ENCODE measurements at regions of chr4 and their contacts with region 1.

Region 1: DNA sequence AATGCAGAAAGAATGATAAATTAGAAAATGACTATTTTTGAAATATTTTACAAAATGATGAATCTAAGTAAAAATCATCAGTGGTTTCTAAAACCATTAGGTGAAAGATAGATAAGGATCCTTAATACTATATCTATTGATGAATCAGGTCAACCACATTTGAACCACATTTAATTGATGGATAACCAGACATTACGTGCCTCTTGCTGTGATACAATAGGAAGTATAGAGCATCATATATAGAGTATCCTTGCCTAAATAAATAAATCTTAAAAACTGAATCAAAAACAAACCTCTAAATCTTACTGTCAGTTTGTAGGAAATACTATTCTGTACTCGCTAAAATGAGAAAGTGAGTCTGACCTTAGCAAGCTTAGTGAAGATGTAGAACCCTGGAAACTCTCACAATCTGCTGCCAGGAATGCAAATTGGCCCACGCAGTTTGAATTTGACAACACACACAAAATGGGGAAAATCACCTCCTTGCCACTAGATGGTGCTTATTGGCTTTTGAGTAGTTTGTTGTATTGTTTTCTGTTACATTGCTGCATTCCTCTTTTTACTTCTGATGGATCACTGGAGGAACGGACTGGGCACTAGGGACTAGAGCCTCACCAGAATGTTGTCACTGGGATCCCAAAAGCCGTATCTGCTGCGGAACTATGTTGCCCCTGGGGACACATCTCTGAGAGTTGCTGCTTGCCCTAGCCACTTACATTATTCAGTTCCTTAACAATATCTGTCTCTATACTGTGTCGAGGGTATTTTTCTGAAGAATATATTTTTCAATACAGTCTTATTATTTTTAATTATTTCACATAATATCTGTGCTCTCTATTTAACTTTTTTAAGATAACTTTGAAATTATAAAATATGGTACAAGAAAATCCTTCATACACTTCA is 25.4 kb upstream of the SLAIN2 start:
- DNase-seq: peak; percentile 43
- ATAC-seq: peak; percentile 74
- H3K4me3 Mint-ChIP-seq: no peak overlapping the region
- H3K27ac Mint-ChIP-seq: no peak overlapping the region
- H3K4me1 Mint-ChIP-seq: peaks cover 4% of the 10 kb centered on the region
- H3K27me3 Mint-ChIP-seq: no peaks in the 10 kb centered on the region

Region 2: DNA sequence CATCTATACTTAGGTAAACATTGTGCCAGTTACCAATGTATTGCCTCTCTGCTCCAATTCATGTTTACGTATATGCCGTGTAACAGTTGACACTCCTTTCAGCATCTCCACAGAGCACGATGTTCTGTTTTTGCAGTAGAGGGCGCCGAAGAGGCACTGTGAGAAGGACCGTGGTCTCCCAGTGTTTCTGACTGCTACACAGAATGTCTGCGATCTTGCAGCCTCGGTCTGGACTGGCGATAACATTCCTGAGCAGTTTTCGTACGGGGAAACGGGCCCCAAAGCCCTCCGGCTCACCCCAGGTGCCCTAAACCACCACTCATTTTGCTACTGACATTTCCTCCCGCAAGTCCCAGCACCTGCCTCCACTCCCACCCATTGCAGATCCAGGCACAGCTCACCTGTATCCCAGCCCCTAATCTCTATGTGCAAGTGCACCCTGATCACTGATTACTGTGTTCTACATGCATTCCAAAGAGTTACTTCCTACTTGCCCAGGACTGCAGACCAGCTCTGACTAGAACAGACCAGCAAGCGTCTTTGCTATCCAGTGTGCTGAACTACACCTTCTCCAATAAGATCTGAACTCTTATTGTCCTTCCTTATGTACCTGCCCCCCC is 389.2 kb before region 1 on chr4:
- CTCF ChIA-PET with region 1: no interaction called
- POLR2A ChIA-PET with region 1: no interaction called
- intact Hi-C with region 1: no loop called
- DNase-seq: peak; percentile 75
- ATAC-seq: peak; percentile 100
- H3K4me3 Mint-ChIP-seq: peak overlapping the region; percentile 43
- H3K27ac Mint-ChIP-seq: no peak overlapping the region
- H3K4me1 Mint-ChIP-seq: peaks cover 4% of the 10 kb centered on the region
- H3K27me3 Mint-ChIP-seq: peaks cover 19% of the 10 kb centered on the region

Region 3: DNA sequence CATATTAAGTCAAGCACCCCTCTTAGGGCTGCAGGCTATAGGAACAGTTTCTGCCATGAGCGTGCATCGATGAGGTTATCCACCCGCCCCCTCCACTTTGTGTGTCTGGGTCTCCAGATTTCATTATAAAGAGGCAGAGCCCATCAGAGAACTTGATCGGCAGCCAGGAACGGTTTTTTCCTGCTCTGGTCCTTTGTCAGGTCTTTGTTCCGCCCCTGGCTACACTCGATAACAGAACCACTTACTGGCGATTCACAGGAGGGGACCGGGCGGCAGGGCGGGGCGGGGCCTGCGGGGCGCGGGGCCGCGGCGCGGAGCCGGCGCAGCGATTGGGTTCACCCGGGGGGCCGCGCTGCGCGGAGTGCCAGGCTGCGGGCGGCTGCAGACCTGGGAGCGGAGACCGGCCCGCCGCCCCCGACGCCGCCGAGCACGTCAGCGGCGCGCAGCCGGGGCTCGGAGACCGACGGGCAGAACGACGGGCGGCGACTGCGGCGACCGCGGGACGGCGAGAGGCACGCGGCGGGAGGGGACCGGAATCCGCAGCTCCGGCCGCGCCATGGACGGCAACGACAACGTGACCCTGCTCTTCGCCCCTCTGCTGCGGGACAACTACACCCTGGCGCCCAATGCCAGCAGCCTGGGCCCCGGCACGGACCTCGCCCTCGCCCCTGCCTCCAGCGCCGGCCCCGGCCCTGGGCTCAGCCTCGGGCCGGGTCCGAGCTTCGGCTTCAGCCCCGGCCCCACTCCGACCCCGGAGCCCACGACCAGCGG is 167.2 kb after region 1 on chr4 and contains the start of gene SLC10A4:
- CTCF ChIA-PET with region 1: interaction called, 3 read pairs
- POLR2A ChIA-PET with region 1: no interaction called
- intact Hi-C with region 1: loop called in 1 of 2 experiments (anchors 10 kb)
- DNase-seq: peak; percentile 31
- ATAC-seq: peak; percentile 42
- H3K4me3 Mint-ChIP-seq: peak within 1 kb of the TSS; percentile 38
- H3K27ac Mint-ChIP-seq: no peak within 1 kb of the TSS
- H3K4me1 Mint-ChIP-seq: peaks cover 7% of the 10 kb centered on the region
- H3K27me3 Mint-ChIP-seq: peaks cover 54% of the 10 kb centered on the region
- total RNA-seq, gene SLC10A4: not detected

Region 4: DNA sequence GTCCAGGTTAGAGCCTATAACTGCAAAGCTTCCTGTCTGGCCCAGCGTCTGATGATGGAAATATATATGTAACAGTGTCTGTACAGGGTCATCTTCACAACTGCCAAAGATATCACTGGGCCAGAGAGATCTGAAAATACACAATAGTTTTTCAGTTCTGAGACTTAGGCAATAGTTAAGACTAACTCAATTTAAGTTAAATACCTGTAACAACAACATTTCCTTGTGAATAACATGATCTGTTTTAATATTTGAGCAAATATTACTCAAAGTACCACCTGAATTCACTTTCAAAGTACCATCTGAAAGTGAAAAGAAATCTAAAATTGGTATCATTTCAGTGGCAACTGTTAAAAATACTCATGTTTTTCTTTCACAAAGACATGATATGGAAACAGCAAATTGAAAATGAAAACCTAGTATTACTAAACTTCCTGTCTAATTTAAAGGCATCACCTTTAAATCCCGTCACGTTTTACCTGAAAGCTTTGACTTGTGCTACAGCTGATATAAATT is 183.6 kb after region 1 on chr4:
- CTCF ChIA-PET with region 1: no interaction called
- POLR2A ChIA-PET with region 1: no interaction called
- intact Hi-C with region 1: loop called in 1 of 2 experiments (anchors 5 kb)
- DNase-seq: no peak
- ATAC-seq: peak; percentile 73
- H3K4me3 Mint-ChIP-seq: no peak overlapping the region
- H3K27ac Mint-ChIP-seq: no peak overlapping the region
- H3K4me1 Mint-ChIP-seq: peaks cover 17% of the 10 kb centered on the region
- H3K27me3 Mint-ChIP-seq: no peaks in the 10 kb centered on the region

Region 5: DNA sequence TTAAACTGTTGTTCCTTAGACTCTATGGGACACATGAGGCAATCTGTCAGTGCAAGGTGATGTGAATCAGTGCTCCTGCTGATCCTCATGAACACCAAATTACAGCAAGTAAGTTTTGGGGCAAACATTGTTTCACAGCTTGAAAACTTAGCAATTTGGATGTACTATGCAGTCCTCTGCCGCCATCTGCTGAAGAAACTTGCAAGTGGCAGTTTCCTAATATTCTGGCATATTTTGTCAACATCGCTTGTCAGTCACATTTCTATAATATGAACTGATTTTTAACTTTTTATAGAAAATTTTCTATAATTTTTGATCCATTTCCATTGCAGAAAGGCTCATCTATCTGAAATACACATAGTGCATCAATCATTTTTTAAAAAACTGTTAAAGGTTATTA is 230.4 kb after region 1 on chr4:
- CTCF ChIA-PET with region 1: no interaction called
- POLR2A ChIA-PET with region 1: no interaction called
- intact Hi-C with region 1: loop called (anchors 1 to 5 kb)
- DNase-seq: peak; percentile 57
- ATAC-seq: peak; percentile 23
- H3K4me3 Mint-ChIP-seq: no peak overlapping the region
- H3K27ac Mint-ChIP-seq: no peak overlapping the region
- H3K4me1 Mint-ChIP-seq: no peaks in the 10 kb centered on the region
- H3K27me3 Mint-ChIP-seq: no peaks in the 10 kb centered on the region

Measured in activated CD4-positive, alpha-beta T cell treated with anti-CD3 and anti-CD28 coated beads for 36 hours (primary cell).